IMR-90 (cell line): ENCODE measurements at regions of chr2 and their contacts with region 1.

Region 1: GRCh38 chr2:239035361-239036078 is 187.6 kb downstream of the TWIST2 start:
- DNase-seq: no peak
- ATAC-seq: peak; percentile 99
- H3K4me3 ChIP-seq: no peak overlapping the region
- H3K27ac ChIP-seq: no peak overlapping the region
- H3K4me1 ChIP-seq: no peaks in the 10 kb centered on the region
- H3K27me3 ChIP-seq: peaks cover 12% of the 10 kb centered on the region
- CTCF ChIP-seq: peak; percentile 68
- POLR2A ChIP-seq: no peak
- RAD21 ChIP-seq: peak; percentile 74

Region 2: GRCh38 chr2:239137165-239137897 is 101.8 kb after region 1 on chr2:
- CTCF ChIA-PET with region 1: no interaction called
- POLR2A ChIA-PET with region 1: no interaction called
- dilution Hi-C with region 1: no loop called
- in situ Hi-C with region 1: no loop called
- intact Hi-C with region 1: no loop called
- DNase-seq: no peak
- ATAC-seq: no peak
- H3K4me3 ChIP-seq: no peak overlapping the region
- H3K27ac ChIP-seq: no peak overlapping the region
- H3K4me1 ChIP-seq: no peaks in the 10 kb centered on the region
- H3K27me3 ChIP-seq: no peaks in the 10 kb centered on the region
- CTCF ChIP-seq: no peak
- POLR2A ChIP-seq: no peak
- RAD21 ChIP-seq: no peak

Region 3: DNA sequence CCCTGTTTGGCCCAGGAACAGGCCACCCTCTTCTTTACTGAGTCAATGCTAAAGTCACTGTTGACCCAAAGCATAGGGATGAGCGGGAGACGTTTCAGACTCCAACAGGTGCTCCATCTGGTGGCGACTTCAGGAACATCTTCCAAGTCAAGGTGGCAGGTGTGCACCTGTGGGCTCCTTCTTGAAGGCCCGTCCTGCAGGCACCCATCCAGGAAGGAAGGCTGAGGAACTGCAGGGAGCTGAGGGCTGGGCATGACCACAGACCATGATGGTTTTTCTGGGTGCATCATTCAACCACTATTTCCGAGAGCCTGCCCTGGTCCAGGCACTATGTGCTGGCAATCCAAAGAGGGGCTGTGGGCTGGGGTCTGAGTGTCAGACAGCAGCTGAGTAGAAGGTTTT is 846.8 kb after region 1 on chr2:
- CTCF ChIA-PET with region 1: no interaction called
- POLR2A ChIA-PET with region 1: no interaction called
- dilution Hi-C with region 1: no loop called
- in situ Hi-C with region 1: no loop called
- intact Hi-C with region 1: loop called (anchors 10 kb)
- DNase-seq: no peak
- ATAC-seq: no peak
- H3K4me3 ChIP-seq: no peak overlapping the region
- H3K27ac ChIP-seq: no peak overlapping the region
- H3K4me1 ChIP-seq: no peaks in the 10 kb centered on the region
- H3K27me3 ChIP-seq: no peaks in the 10 kb centered on the region
- CTCF ChIP-seq: no peak
- POLR2A ChIP-seq: no peak
- RAD21 ChIP-seq: no peak

Region 4: GRCh38 chr2:240136013-240136670 is 1100.6 kb after region 1 on chr2 and contains the start of gene COPS9:
- CTCF ChIA-PET with region 1: no interaction called
- POLR2A ChIA-PET with region 1: no interaction called
- dilution Hi-C with region 1: no loop called
- in situ Hi-C with region 1: loop called (anchors 25 kb)
- intact Hi-C with region 1: no loop called
- DNase-seq: peak; percentile 85
- ATAC-seq: peak; percentile 98
- H3K4me3 ChIP-seq: peak within 1 kb of the TSS; percentile 95
- H3K27ac ChIP-seq: peak within 1 kb of the TSS; percentile 53
- H3K4me1 ChIP-seq: peaks cover 9% of the 10 kb centered on the region
- H3K27me3 ChIP-seq: peaks cover 14% of the 10 kb centered on the region
- CTCF ChIP-seq: no peak
- POLR2A ChIP-seq: peak; percentile 83
- RAD21 ChIP-seq: no peak
- total RNA-seq, gene COPS9: 66.4 and 85.9 TPM in 2 replicates